ENCODE measurements at regions of chr7 and their contacts with region 1.

Region 1: GRCh38 chr7:53500076-53500475 is 464.6 kb downstream of the POM121L12 start:
- DNase-seq: no peak
- H3K4me3 ChIP-seq: no peak overlapping the region
- H3K27ac ChIP-seq: no peak overlapping the region
- H3K4me1 ChIP-seq: no peaks in the 10 kb centered on the region
- H3K27me3 ChIP-seq: no peaks in the 10 kb centered on the region
- CTCF ChIP-seq: no peak
- EP300 ChIP-seq: no peak
- POLR2A ChIP-seq: no peak

Region 2: GRCh38 chr7:53446170-53446569 is 53.9 kb before region 1 on chr7:
- in situ Hi-C with region 1: no loop called
- intact Hi-C with region 1: loop called (anchors 2 kb)
- DNase-seq: no peak
- H3K4me3 ChIP-seq: no peak overlapping the region
- H3K27ac ChIP-seq: no peak overlapping the region
- H3K4me1 ChIP-seq: no peaks in the 10 kb centered on the region
- H3K27me3 ChIP-seq: no peaks in the 10 kb centered on the region
- CTCF ChIP-seq: no peak
- EP300 ChIP-seq: no peak
- POLR2A ChIP-seq: no peak